B cell (primary cell): ENCODE measurements at regions of chr7 and their contacts with region 1.

Region 1: GRCh38 chr7:26090927-26091519 is 61.0 kb upstream of the NFE2L3 start:
- DNase-seq: peak; percentile 62
- ATAC-seq: peak; percentile 45
- H3K4me3 ChIP-seq: no peak overlapping the region
- H3K4me3 Mint-ChIP-seq: peak overlapping the region; percentile 32
- H3K27ac ChIP-seq: no peak overlapping the region
- H3K27ac Mint-ChIP-seq: peak overlapping the region; percentile 0
- H3K4me1 ChIP-seq: peaks cover 17 to 22% of the 10 kb centered on the region in 2 donors
- H3K4me1 Mint-ChIP-seq: peaks cover 26% of the 10 kb centered on the region
- H3K27me3 ChIP-seq: no peaks in the 10 kb centered on the region
- H3K27me3 Mint-ChIP-seq: no peaks in the 10 kb centered on the region
- CTCF ChIP-seq: peak; percentile 66

Region 2: DNA sequence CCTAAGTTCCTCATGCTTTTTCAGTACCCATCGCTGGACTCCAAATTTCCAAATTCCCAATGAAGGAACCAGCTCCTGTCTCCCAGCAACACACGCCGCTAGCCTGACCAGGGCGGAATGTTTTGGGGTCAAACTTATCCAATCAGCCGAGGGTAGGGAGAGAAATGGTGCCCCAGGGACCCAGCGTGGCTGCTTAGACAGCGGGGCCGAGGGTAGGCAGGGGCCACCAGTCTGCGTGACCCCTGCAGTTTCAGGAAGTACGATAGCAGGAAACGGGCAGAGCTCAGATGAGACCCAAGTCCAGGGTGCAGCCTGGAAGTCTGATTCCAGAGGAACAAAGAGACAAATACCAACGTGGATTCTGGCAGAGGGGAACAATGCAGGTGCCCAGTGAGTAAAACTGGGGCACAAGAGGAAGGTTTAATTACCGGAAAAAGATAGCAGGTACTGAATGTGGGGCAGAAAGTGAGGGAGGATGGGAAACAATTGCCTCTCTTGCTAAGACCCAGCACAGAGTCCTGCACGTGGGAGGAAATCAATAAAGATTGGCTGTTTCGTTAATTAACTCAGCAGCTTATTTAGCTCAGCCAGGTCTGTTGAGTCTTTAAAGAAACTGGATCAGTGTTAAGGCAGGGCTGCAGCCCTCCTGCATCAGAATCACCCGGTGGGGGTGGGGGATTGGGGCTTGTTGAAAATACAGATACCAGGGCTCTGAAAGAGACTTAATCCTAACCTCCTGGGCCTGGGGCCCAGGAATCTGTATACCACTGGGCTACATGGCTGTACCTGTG is 10.5 kb after region 1 on chr7:
- CTCF ChIA-PET with region 1: interaction called, 13 read pairs
- POLR2A ChIA-PET with region 1: interaction called, 3 read pairs
- intact Hi-C with region 1: no loop called
- DNase-seq: peak; percentile 62
- ATAC-seq: peak; percentile 64
- H3K4me3 ChIP-seq: peak overlapping the region; percentile 42 to 85 (median 75)
- H3K4me3 Mint-ChIP-seq: peak overlapping the region; percentile 99
- H3K27ac ChIP-seq: peak overlapping the region; percentile 43 to 77
- H3K27ac Mint-ChIP-seq: peak overlapping the region; percentile 96
- H3K4me1 ChIP-seq: peaks cover 30 to 48% of the 10 kb centered on the region in 2 donors
- H3K4me1 Mint-ChIP-seq: peaks cover 45% of the 10 kb centered on the region
- H3K27me3 ChIP-seq: no peaks in the 10 kb centered on the region
- H3K27me3 Mint-ChIP-seq: no peaks in the 10 kb centered on the region
- CTCF ChIP-seq: no peak

Region 3: DNA sequence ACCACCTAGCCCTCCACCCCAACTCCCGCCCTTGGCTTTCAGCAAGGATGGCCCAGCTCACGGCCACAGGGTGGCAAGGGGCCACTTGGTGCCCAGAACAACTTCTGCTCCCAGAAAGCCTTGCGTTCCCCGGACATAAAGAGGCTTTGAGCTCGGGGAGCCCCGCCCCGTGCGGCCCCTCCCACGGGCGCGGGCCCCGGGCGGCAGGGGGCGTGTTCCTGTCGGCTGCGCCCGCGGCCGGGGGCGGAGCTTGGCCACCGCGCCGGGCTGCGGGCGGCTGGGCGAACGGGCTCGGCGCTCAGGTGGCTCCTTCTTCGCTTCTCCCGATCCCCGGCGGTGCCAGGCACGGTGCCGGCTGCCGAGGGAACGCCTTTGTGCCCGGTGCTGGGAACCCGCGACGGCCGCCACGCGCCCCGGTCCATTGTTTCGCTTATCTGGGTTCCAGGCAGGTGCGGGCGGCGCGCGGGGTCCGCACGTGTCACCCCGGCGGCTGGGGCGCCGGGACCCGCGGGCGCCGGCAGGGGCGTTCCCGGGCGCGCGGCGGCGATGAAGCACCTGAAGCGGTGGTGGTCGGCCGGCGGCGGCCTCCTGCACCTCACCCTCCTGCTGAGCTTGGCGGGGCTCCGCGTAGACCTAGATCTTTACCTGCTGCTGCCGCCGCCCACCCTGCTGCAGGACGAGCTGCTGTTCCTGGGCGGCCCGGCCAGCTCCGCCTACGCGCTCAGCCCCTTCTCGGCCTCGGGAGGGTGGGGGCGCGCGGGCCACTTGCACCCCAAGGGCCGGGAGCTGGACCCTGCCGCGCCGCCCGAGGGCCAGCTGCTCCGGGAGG is 61.1 kb after region 1 on chr7 and contains the start of gene NFE2L3:
- CTCF ChIA-PET with region 1: interaction called, 22 read pairs
- POLR2A ChIA-PET with region 1: no interaction called
- intact Hi-C with region 1: loop called (anchors 2 kb)
- DNase-seq: peak; percentile 89
- ATAC-seq: peak; percentile 89
- H3K4me3 ChIP-seq: peak within 1 kb of the TSS; percentile 35 to 90 (median 62)
- H3K4me3 Mint-ChIP-seq: peak within 1 kb of the TSS; percentile 97
- H3K27ac ChIP-seq: peak within 1 kb of the TSS; percentile 16 to 65
- H3K27ac Mint-ChIP-seq: peak within 1 kb of the TSS; percentile 88
- H3K4me1 ChIP-seq: peaks cover 34 to 42% of the 10 kb centered on the region in 2 donors
- H3K4me1 Mint-ChIP-seq: peaks cover 48% of the 10 kb centered on the region
- H3K27me3 ChIP-seq: no peaks in the 10 kb centered on the region
- H3K27me3 Mint-ChIP-seq: no peaks in the 10 kb centered on the region
- CTCF ChIP-seq: no peak
- total RNA-seq, gene NFE2L3: 1.6 and 4.5 TPM in 2 replicates

Region 4: DNA sequence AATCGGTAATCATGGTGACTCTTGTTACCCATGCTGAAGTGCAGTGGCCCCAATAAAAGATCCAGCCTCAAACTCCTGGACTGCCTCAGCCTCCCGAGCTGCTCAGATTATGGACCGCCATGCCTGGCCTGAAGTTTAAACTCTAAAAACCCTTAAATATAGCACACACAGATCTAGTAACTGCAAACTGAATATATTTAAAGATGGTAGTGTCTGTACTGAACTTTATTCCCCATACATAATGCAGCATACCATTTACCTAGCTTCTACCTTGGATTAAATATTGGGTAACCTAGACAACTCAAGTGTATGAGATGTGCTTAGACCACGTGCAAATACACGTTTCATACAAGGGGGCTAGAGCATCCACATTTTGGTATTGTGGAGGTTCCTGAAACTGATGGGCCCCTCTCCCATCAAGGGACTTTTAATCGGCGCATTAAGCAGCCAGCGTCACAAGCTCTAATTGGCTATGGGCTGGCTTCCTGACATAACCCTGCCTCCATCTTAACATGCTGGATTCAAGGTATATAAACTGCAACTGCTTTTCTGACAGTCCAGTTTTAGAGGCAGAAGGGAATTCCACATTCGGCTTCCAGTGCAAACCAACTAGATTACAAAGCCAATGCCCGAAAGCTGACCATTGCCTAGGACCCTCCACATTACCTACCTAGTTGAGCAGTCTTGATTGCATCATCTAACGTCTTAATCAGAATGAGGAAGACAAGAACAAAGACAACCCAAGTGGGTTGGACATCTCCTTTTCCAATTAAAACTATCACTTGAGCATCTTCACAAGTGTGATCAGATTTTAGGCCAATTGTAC is 96.6 kb after region 1 on chr7:
- CTCF ChIA-PET with region 1: interaction called, 50 read pairs
- POLR2A ChIA-PET with region 1: no interaction called
- intact Hi-C with region 1: no loop called
- DNase-seq: peak; percentile 45
- ATAC-seq: no peak
- H3K4me3 ChIP-seq: no peak overlapping the region
- H3K4me3 Mint-ChIP-seq: no peak overlapping the region
- H3K27ac ChIP-seq: peak overlapping the region in 1 of 2 donors; percentile 20
- H3K27ac Mint-ChIP-seq: peak overlapping the region; percentile 61
- H3K4me1 ChIP-seq: peaks cover 14 to 15% of the 10 kb centered on the region in 2 donors
- H3K4me1 Mint-ChIP-seq: peaks cover 83% of the 10 kb centered on the region
- H3K27me3 ChIP-seq: no peaks in the 10 kb centered on the region
- H3K27me3 Mint-ChIP-seq: no peaks in the 10 kb centered on the region
- CTCF ChIP-seq: no peak

Region 5: DNA sequence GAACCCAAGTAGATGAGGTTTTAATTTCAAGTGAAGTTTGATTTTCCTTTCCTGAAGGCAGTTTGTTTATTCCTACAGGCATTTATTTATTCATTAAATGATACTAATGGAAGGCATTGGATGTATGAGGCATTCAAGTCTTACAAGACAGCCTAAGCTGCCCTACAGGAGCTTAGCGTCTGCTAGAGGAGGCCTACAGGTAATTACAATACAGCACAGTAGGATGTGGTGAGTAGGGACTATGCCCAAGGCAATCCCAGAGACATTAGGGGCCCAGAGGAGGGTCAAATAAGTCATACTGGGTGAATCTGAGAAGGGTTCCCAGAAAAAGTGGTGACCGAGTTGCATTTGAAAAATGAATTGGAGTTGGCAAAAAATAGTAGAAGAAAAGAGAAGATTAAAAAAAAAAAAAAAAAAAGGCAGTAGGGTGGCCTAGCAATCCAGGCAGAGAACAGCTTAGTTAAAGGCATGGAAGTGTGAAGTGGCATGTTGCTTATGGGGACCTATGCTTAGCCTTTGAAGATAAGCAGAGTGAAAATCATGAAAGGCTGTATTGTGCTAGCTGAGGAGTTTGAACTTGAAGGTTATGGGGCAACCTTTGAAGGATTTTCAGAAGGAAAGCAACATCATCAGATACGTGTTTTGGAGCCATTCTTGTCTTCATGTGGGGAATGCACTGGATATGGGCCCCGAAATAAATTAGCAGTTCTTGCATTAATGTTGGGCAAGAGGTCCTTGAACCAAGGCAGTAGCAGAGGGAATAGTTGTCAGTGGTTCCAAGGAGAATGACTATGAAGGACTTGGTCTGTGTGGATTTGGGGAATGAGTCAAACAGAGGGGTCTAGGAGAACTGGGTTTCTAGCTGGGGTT is 266.1 kb after region 1 on chr7:
- CTCF ChIA-PET with region 1: interaction called, 18 read pairs
- POLR2A ChIA-PET with region 1: no interaction called
- intact Hi-C with region 1: no loop called
- DNase-seq: no peak
- ATAC-seq: no peak
- H3K4me3 ChIP-seq: no peak overlapping the region
- H3K4me3 Mint-ChIP-seq: no peak overlapping the region
- H3K27ac ChIP-seq: no peak overlapping the region
- H3K27ac Mint-ChIP-seq: peak overlapping the region; percentile 58
- H3K4me1 ChIP-seq: peaks cover 21 to 37% of the 10 kb centered on the region in 2 donors
- H3K4me1 Mint-ChIP-seq: peaks cover 42% of the 10 kb centered on the region
- H3K27me3 ChIP-seq: no peaks in the 10 kb centered on the region
- H3K27me3 Mint-ChIP-seq: no peaks in the 10 kb centered on the region
- CTCF ChIP-seq: no peak

Region 6: GRCh38 chr7:27774717-27775328 is 1683.8 kb after region 1 on chr7:
- CTCF ChIA-PET with region 1: no interaction called
- POLR2A ChIA-PET with region 1: no interaction called
- intact Hi-C with region 1: no loop called
- DNase-seq: peak; percentile 24
- ATAC-seq: no peak
- H3K4me3 ChIP-seq: no peak overlapping the region
- H3K4me3 Mint-ChIP-seq: no peak overlapping the region
- H3K27ac ChIP-seq: no peak overlapping the region
- H3K27ac Mint-ChIP-seq: no peak overlapping the region
- H3K4me1 ChIP-seq: no peaks in the 10 kb centered on the region
- H3K4me1 Mint-ChIP-seq: no peaks in the 10 kb centered on the region
- H3K27me3 ChIP-seq: no peaks in the 10 kb centered on the region
- H3K27me3 Mint-ChIP-seq: no peaks in the 10 kb centered on the region
- CTCF ChIP-seq: peak; percentile 65